Right ventricle myocardium inferior (tissue), 1 donor: ENCODE measurements at regions of chr4 and their contacts with region 1.

Region 1: GRCh38 chr4:56424697-56425514 is 10.5 kb downstream of the PPAT start:
- DNase-seq: no peak
- ATAC-seq: peak; percentile 34

Region 2: DNA sequence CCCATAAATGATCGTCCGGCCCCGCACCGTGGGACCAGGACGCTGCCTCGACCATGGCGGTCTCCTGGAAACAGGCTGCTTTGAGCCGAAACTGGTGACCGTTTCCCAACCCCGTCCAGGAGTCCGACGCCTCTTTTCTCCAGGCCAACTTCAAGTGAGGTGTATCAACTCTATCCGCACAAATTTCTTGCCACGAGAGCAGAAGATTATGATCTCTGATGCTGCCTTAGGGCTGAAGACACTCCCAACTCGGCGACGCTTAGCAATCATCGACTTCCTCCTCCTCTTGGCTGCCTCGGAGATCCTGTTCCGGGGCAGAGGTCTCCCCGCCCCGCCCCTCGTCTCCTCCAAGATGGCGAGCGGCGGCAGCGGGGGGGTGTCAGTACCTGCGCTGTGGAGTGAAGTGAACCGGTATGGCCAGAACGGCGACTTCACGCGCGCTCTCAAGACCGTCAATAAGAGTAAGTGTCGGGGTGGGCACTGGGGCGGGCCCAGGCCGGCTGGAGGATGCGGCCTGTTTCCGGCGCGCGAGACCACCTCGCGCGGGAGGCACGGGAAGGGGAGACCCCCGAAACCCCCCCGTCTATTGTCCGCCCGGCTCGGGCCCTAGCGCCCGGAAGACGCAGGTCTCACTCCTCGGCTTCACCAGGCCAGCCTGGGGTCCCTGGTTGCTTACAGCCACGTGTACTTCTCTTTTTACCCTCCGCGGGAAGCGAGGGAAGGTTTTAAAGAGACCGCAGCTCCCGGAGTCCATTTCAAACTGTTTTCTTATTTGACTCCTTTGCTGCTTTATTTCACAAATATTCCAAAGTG is 42.6 kb after region 1 on chr4 and contains the start of gene SRP72:
- intact Hi-C with region 1: no loop called
- DNase-seq: peak; percentile 94
- ATAC-seq: peak; percentile 98
- total RNA-seq, gene SRP72: 32.4 TPM

Region 3: DNA sequence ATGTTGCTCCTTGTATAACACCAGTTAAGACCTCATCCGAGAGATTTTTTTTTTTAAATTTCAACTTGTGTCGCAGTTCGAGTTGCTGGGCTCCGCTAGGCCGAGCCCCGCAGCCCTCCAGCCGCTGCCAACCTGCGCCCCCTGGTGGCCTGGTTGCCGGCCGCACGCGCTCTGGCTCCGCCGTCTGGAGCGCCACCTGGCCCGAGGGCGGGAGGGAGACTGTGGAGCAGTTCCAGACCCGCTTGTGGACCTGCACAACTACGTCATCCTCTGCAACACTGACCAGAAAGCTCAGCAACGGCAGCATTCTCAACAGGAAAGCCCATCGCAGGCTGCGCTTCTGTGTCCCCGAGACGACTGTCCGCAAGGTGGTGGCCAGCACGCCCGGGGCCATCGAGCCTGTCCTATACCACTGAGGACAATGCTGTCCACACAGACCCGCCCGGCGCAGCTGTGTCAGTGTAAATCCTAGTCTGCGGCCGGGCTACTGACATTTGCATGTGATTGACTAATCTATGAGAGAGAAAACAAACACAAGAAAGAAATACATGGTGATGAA is 119.7 kb after region 1 on chr4:
- intact Hi-C with region 1: loop called (anchors 5 kb)
- DNase-seq: peak; percentile 93
- ATAC-seq: peak; percentile 99

Region 4: GRCh38 chr4:56828784-56829535 is 404.1 kb after region 1 on chr4:
- intact Hi-C with region 1: loop called (anchors 10 kb)
- DNase-seq: no peak
- ATAC-seq: no peak